OCI-LY7 (cell line): ENCODE measurements at regions of chr10 and their contacts with region 1.

Region 1: GRCh38 chr10:88990384-88991160 is at the start of gene FAS:
- DNase-seq: peak; percentile 82
- H3K4me3 ChIP-seq: peak within 1 kb of the TSS; percentile 84
- H3K27ac ChIP-seq: peak within 1 kb of the TSS; percentile 50
- H3K4me1 ChIP-seq: peaks cover 45% of the 10 kb centered on the region
- CTCF ChIP-seq: no peak
- total RNA-seq, gene FAS: 7.7 and 10.1 TPM in 2 replicates

Region 2: GRCh38 chr10:87817609-87818504 is 1172.7 kb before region 1 on chr10 and contains the start of gene ATAD1:
- CTCF ChIA-PET with region 1: no interaction called
- POLR2A ChIA-PET with region 1: interaction called, 4 read pairs
- intact Hi-C with region 1: loop called (anchors 5 kb)
- DNase-seq: peak; percentile 93
- H3K4me3 ChIP-seq: peak within 1 kb of the TSS; percentile 86
- H3K27ac ChIP-seq: peak within 1 kb of the TSS; percentile 79
- H3K4me1 ChIP-seq: peaks cover 28% of the 10 kb centered on the region
- CTCF ChIP-seq: peak; percentile 28; the same call in 1 of the 2 replicates
- total RNA-seq, gene ATAD1: 17.7 and 19.6 TPM in 2 replicates

Region 3: GRCh38 chr10:88386821-88387773 is 603.5 kb before region 1 on chr10:
- CTCF ChIA-PET with region 1: no interaction called
- POLR2A ChIA-PET with region 1: no interaction called
- intact Hi-C with region 1: loop called (anchors 10 kb)
- DNase-seq: peak; percentile 91
- H3K4me3 ChIP-seq: peak overlapping the region; percentile 65
- H3K27ac ChIP-seq: peak overlapping the region; percentile 99
- H3K4me1 ChIP-seq: peaks cover 85% of the 10 kb centered on the region
- CTCF ChIP-seq: no peak

Region 4: DNA sequence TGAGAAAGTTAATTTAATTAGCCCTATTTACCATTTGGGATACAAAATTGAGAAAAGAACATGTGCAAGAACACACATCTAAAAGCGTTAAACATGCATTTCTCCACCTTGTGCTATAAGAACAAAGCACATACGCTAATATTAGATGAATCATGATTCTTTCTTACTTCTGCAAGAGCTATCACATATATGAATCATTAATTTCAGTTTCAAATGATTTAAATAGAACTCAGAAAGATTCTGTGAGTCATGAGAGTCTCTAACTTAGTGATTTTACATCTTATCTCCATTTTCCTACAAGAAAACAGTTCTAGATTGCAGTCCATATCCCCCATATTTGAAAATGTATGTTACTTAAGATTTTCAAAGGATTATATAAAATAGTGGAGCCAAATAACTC is 581.3 kb before region 1 on chr10:
- CTCF ChIA-PET with region 1: no interaction called
- POLR2A ChIA-PET with region 1: no interaction called
- intact Hi-C with region 1: no loop called
- DNase-seq: no peak
- H3K4me3 ChIP-seq: no peak overlapping the region
- H3K27ac ChIP-seq: no peak overlapping the region
- H3K4me1 ChIP-seq: peaks cover 23% of the 10 kb centered on the region
- CTCF ChIP-seq: no peak

Region 5: DNA sequence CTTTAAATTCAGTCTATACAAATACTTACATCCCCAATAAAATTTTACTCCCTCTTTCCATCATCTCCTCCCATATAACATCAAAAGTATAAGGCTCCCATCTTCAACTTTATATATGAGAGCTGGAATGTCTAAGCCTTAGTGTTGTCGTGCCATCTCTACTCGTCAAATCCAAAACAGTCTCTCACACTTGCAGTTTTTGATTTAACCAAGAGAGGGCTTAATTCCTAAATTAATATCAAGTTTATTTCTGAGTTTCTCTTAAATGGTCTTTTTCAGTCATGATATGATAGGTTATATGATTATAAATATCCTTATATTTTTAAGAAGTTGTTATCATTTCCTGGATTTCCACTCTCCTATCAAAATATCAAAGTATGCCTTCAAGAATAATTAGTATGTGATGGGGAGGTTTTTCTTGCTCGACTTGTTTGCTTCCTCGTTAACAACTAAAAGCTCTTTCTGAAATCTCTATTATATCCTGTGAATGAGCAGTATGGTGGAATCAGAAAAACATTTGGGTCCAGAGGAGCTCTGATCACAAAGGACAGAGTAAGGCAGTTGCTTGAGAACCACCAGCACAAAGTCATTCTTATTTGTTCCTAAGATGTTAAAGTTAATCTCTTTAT is 297.1 kb before region 1 on chr10:
- CTCF ChIA-PET with region 1: no interaction called
- POLR2A ChIA-PET with region 1: no interaction called
- intact Hi-C with region 1: no loop called
- DNase-seq: no peak
- H3K4me3 ChIP-seq: no peak overlapping the region
- H3K27ac ChIP-seq: no peak overlapping the region
- H3K4me1 ChIP-seq: no peaks in the 10 kb centered on the region
- CTCF ChIP-seq: peak; percentile 55

Region 6: DNA sequence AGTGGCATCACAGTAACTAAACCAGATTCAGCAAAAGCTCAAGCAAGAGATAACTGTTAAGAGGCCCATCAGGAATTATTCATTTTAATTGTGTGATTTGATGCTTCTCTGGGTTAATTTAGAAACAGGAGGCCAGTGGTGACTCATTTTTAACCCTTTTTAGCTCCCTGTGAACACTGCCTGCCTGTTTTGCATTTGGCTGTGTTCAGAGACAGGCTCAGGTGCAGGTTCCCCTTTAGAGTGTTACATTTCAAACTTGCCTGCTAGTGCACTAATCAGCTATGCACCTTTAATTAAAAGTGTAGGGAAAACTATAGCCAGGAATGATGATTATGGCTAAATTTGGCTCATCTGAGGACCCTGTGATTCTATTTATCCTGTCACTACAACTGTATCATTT is 104.0 kb before region 1 on chr10:
- CTCF ChIA-PET with region 1: no interaction called
- POLR2A ChIA-PET with region 1: interaction called, 49 read pairs
- intact Hi-C with region 1: no loop called
- DNase-seq: peak; percentile 78
- H3K4me3 ChIP-seq: peak overlapping the region; percentile 80
- H3K27ac ChIP-seq: peak overlapping the region; percentile 93
- H3K4me1 ChIP-seq: peaks cover 94% of the 10 kb centered on the region
- CTCF ChIP-seq: no peak

Region 7: DNA sequence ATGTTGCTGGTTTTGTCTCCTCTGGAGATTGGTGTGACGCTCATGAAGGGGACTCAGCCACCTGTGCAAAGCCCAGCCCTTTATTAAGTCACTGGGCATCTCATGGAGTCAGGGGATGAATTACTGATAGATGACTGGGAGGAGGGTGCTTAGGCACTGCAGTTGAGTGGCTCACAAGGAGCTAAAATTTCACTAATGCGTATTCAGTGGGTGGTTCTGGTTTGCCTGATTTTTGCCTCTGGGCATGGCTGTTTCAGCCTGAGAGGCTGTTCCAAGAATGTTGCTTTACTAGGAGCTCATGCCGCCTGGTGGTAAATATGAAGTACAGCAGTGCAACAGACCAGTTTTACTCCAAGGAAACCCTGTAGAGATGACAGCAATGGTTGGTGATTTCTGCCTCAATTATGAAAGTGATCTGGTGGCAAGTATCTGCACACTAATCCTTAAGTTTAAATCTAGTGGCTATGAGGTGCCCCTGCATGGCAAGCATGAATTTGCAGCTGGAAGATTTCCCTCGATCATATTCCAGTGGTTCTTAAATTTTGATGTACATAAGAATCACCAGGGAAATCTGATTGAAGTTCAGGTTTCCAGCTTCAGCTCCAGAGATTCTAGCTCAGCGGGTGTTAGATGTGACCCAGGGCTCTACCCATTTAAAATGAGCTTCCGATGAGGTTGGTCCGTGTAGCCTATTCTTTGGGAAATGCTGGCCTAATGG is 57.9 kb before region 1 on chr10:
- CTCF ChIA-PET with region 1: interaction called, 6 read pairs
- POLR2A ChIA-PET with region 1: interaction called, 7 read pairs
- intact Hi-C with region 1: loop called (anchors 2 kb)
- DNase-seq: peak; percentile 85
- H3K4me3 ChIP-seq: no peak overlapping the region
- H3K27ac ChIP-seq: no peak overlapping the region
- H3K4me1 ChIP-seq: peaks cover 32% of the 10 kb centered on the region
- CTCF ChIP-seq: peak; percentile 94

Region 8: DNA sequence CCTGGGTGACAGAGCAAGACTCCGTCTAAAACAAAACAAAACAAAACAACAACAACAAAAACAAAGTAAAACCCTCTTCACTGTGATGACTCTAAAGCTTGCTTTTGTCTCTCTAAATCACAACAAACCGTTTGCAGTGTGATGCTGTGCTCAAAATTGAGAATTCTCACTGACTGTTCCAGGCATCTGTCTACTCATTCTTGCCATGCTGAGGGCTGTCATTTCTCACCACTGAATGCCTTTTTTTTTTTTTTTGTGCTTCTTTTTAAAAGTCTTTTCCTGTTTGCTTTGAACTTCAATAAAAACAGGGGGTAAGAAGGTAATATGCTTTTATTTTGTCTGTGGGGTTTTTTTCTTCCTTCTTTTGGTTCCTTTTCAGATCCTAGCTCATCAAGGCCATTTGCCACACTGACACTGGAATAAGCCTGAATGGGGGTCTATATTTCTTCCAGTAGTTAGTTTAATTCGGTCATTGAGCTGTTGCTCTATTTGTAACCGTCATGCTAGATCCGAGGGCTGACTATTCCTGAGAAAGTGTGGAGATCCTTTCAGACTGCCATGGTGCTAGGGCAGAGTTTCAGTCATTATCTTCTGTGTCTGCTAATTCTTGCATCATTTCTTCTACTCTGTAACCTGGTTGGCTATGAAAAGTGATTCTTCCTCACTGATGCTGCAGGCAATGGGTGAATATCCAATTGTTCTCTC is 10.6 kb after region 1 on chr10:
- CTCF ChIA-PET with region 1: interaction called, 5 read pairs
- POLR2A ChIA-PET with region 1: interaction called, 57 read pairs
- intact Hi-C with region 1: no loop called
- DNase-seq: peak; percentile 23
- H3K4me3 ChIP-seq: peak overlapping the region; percentile 63
- H3K27ac ChIP-seq: peak overlapping the region; percentile 48
- H3K4me1 ChIP-seq: peaks cover 70% of the 10 kb centered on the region
- CTCF ChIP-seq: no peak

Region 9: DNA sequence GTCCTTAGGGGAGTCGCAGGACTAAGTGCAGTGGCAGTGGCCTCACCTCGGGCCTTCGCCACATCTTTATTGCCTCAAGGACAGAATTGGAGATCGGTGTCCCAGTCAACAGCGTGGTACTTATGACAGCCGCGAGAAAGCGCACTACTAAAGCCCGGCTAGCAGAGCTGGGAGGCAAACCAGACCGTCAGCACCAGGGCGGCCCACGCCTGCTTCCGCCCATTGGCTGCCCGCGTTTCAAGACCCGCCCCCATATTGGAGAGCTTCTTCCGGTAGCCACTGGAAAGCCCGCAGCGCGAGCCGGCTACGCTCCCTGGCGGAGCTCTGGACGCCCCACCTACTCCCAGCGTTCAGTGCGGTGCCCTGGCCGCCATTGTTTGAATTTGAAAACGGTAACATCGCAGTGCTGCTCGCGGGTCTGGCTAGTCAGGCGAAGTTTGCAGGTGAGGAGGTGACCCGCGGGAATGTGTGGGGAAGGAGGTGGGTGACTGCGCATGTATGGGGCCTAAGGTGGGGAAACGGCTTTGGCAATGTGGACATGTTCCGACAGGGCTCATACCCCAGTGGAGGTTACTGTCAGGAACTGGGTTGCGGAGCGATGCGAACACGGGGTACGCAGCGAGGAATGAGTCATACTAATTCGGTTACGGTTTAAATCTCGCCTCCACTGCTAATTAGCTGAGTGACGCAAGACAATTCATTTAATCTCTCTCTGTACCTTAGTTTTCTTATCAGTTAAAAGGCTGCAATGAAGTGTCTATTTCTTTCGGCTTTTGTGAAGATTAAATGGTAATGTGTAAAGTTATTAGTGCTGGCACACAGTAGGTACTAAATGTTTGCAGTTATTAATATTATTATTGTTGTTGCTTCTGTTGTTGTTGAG is 710.9 kb after region 1 on chr10 and contains the start of gene KIF20B:
- CTCF ChIA-PET with region 1: no interaction called
- POLR2A ChIA-PET with region 1: no interaction called
- intact Hi-C with region 1: loop called (anchors 10 kb)
- DNase-seq: peak; percentile 97
- H3K4me3 ChIP-seq: peak within 1 kb of the TSS; percentile 92
- H3K27ac ChIP-seq: peak within 1 kb of the TSS; percentile 74
- H3K4me1 ChIP-seq: peaks cover 45% of the 10 kb centered on the region
- CTCF ChIP-seq: 0 out of 2 replicates have a peak, but pooled peaks have one; percentile 30
- total RNA-seq, gene KIF20B: 25.0 and 30.2 TPM in 2 replicates